Activated CD8-positive, alpha-beta T cell treated with anti-CD3 and anti-CD28 coated beads for 36 hours (primary cell): ENCODE measurements at regions of chr12 and their contacts with region 1.

Region 1: DNA sequence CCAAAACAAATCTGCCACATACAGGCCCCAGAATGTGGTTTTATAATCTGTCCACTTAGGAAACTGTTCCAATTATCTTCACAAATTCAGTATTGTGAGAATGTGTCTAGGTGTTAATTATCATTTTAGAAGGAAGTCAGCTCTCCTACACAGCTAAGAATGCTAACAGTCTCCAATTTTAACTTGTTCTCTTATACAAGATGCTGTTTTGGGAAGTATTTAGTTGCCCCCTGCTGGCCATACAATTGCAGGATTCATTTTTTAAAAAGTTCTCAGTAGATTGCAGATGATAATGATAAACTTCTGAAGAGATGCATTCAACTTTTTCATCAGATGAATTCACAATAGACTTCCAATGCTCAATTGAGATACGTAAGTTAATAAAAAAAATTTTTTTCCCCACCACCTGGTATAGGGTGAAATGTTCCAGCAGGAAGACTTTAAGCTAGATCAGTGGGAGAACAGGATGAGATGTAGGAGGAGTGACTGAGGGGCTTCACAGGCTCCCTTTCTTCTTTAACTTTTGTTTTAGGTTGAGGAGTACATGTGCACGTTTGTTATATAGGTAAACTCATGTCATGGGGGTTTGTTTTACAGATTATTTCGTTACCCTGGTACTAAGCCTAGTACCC is 27.3 kb upstream of the OSBPL8 start:
- DNase-seq: peak; percentile 65
- ATAC-seq: no peak
- H3K4me3 Mint-ChIP-seq: no peak overlapping the region
- H3K27ac Mint-ChIP-seq: no peak overlapping the region
- H3K4me1 Mint-ChIP-seq: peaks cover 2% of the 10 kb centered on the region
- H3K27me3 Mint-ChIP-seq: no peaks in the 10 kb centered on the region
- CTCF ChIP-seq: peak; percentile 83

Region 2: GRCh38 chr12:76470028-76470939 is 116.6 kb before region 1 on chr12:
- CTCF ChIA-PET with region 1: interaction called, 14 read pairs
- POLR2A ChIA-PET with region 1: no interaction called
- intact Hi-C with region 1: no loop called
- DNase-seq: peak; percentile 20
- ATAC-seq: peak; percentile 82
- H3K4me3 Mint-ChIP-seq: no peak overlapping the region
- H3K27ac Mint-ChIP-seq: no peak overlapping the region
- H3K4me1 Mint-ChIP-seq: peaks cover 11% of the 10 kb centered on the region
- H3K27me3 Mint-ChIP-seq: no peaks in the 10 kb centered on the region
- CTCF ChIP-seq: no peak

Region 3: DNA sequence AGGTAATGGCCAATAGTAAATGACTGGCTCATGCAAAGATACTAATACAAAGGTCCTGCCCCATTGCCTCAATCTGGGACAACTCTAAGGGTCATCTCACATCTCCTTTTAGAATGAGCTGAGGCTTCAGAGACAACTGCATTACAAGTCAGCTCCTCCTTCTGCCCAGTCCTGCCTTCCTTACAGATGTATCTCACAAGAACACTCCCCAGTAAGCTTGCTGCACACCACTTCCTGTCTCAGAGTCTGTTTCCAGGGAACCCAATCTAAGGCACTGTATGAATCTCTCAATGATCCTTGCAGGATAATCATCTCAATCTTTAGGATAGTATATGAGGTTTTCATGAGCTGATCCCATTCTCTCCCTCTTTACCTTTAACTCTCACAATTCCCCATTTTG is 119.2 kb after region 1 on chr12:
- CTCF ChIA-PET with region 1: no interaction called
- POLR2A ChIA-PET with region 1: no interaction called
- intact Hi-C with region 1: no loop called
- DNase-seq: no peak
- ATAC-seq: no peak
- H3K4me3 Mint-ChIP-seq: no peak overlapping the region
- H3K27ac Mint-ChIP-seq: no peak overlapping the region
- H3K4me1 Mint-ChIP-seq: no peaks in the 10 kb centered on the region
- H3K27me3 Mint-ChIP-seq: no peaks in the 10 kb centered on the region
- CTCF ChIP-seq: no peak